ENCODE measurements at regions of chr5 and their contacts with region 1.

Region 1: GRCh38 chr5:103031607-103032006 is 88.3 kb downstream of the GIN1 start:
- DNase-seq: no peak
- H3K4me3 ChIP-seq: no peak overlapping the region
- H3K27ac ChIP-seq: no peak overlapping the region
- H3K4me1 ChIP-seq: no peaks in the 10 kb centered on the region
- H3K27me3 ChIP-seq: no peaks in the 10 kb centered on the region
- CTCF ChIP-seq: peak in 2 of 3 experiments; percentile 20 to 33; a peak in 2 of 4 replicates
- EP300 ChIP-seq: no peak
- POLR2A ChIP-seq: no peak
- RAD21 ChIP-seq: no peak; a peak in 1 of 4 replicates

Region 2: DNA sequence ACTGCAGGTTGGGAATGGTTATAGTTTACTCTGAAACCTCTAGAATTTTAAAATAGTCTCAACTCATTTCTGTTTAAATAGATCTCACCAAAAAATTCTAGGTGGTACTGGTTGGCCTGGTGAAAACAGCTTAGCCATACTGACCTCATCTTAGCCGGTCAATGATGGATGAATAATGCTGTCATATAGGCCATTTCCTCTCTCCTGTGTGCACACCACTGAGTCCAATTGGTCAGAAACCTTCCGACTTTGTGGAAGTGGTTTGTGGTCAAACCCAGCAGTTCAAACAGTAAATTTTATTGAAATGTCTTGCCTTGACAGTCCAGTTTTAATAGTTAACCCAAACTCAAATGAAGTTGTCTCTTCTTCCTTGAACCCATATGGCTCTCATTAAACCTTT is 10.3 kb before region 1 on chr5:
- CTCF ChIA-PET with region 1: interaction called, 33 read pairs
- POLR2A ChIA-PET with region 1: no interaction called
- DNase-seq: no peak
- H3K4me3 ChIP-seq: no peak overlapping the region
- H3K27ac ChIP-seq: no peak overlapping the region
- H3K4me1 ChIP-seq: no peaks in the 10 kb centered on the region
- H3K27me3 ChIP-seq: no peaks in the 10 kb centered on the region
- CTCF ChIP-seq: no peak
- EP300 ChIP-seq: no peak
- POLR2A ChIP-seq: no peak
- RAD21 ChIP-seq: no peak

Region 3: GRCh38 chr5:103066326-103066725 is 34.7 kb after region 1 on chr5:
- CTCF ChIA-PET with region 1: interaction called, 10 read pairs
- POLR2A ChIA-PET with region 1: no interaction called
- DNase-seq: no peak
- H3K4me3 ChIP-seq: no peak overlapping the region
- H3K27ac ChIP-seq: no peak overlapping the region
- H3K4me1 ChIP-seq: no peaks in the 10 kb centered on the region
- H3K27me3 ChIP-seq: no peaks in the 10 kb centered on the region
- CTCF ChIP-seq: no peak
- EP300 ChIP-seq: no peak
- POLR2A ChIP-seq: no peak
- RAD21 ChIP-seq: no peak

Measured in H1 (cell line).